HepG2 (cell line): ENCODE measurements at regions of chr1 and their contacts with region 1.

Region 1: GRCh38 chr1:151739590-151740375 is 18.5 kb downstream of the RIIAD1 start:
- DNase-seq: no peak
- ATAC-seq: no peak
- H3K4me3 ChIP-seq: no peak overlapping the region
- H3K27ac ChIP-seq: no peak overlapping the region
- H3K4me1 ChIP-seq: no peaks in the 10 kb centered on the region
- H3K27me3 ChIP-seq: peaks cover 0 to 11% of the 10 kb centered on the region in 2 experiments; a peak in 2 of 5 replicates
- CTCF ChIP-seq: no peak
- EP300 ChIP-seq: no peak
- POLR2A ChIP-seq: no peak
- RAD21 ChIP-seq: no peak

Region 2: GRCh38 chr1:151443846-151444782 is 295.7 kb before region 1 on chr1:
- CTCF ChIA-PET with region 1: no interaction called
- POLR2A ChIA-PET with region 1: no interaction called
- in situ Hi-C with region 1: no loop called
- intact Hi-C with region 1: loop called (anchors 5 kb)
- DNase-seq: peak; percentile 69
- ATAC-seq: peak; percentile 93
- H3K4me3 ChIP-seq: no peak overlapping the region
- H3K27ac ChIP-seq: peak overlapping the region; percentile 11
- H3K4me1 ChIP-seq: no peaks in the 10 kb centered on the region
- H3K27me3 ChIP-seq: no peaks in the 10 kb centered on the region
- CTCF ChIP-seq: peak; percentile 73
- EP300 ChIP-seq: no peak
- POLR2A ChIP-seq: no peak
- RAD21 ChIP-seq: peak; percentile 60; the same call in 1 of the 2 replicates

Region 3: DNA sequence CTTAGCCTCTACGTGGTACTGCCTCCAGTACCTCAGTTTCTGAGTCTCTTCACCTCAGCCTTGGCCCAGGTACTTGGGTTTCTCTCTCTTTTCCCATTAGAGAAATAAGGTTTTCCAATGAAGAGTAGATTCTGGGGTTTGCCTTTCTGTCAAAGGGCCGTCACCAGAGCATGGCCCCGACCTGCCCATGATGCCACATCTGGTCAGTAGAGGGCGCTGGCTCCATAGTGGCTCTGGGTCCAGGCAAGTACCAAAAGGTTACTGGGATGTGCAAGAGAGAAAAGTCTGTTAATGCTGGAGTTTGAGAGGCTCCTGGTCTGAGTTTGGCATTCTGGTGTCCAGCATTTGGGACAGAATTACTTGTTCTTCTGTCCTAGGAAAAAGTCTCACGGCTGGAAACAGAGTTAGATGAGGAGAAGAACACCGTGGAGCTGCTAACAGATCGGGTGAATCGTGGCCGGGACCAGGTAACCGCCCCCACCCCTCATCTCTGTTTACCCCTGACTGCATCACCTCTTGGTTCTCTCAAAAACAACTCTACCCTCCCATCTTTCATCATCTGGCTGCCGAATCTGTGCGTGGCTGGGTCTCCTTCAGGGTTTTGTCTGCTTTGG is 205.0 kb before region 1 on chr1:
- CTCF ChIA-PET with region 1: interaction called, 15 read pairs
- POLR2A ChIA-PET with region 1: no interaction called
- in situ Hi-C with region 1: loop called (anchors 25 kb)
- intact Hi-C with region 1: loop called (anchors 1 kb)
- DNase-seq: peak; percentile 53
- ATAC-seq: peak; percentile 85
- H3K4me3 ChIP-seq: no peak overlapping the region
- H3K27ac ChIP-seq: no peak overlapping the region
- H3K4me1 ChIP-seq: peaks cover 16% of the 10 kb centered on the region
- H3K27me3 ChIP-seq: no peaks in the 10 kb centered on the region
- CTCF ChIP-seq: peak; percentile 93
- EP300 ChIP-seq: no peak
- POLR2A ChIP-seq: no peak
- RAD21 ChIP-seq: peak; percentile 87

Region 4: DNA sequence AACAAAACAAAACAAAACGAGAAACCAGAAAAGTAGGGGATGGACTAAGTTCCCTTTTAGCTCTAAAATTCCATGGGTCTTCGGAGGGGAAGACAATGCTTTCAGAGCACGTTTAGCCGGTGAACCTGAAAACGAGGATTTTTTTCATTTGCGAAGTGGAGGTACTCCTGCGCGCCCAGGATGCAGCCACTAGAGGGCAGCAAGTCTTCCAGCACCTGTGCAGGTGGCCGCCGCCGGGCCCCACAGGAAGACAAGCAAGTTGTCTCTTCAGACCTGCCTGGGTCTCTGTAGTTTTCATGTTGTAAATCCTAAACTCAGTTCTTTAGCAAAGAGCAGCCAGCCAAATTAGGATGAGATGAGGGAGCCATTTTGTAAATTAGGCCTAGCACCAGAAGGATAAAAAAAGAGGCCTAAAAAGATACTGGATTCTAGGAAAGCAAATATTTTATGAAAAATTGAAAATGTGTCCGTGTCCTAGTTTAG is 145.6 kb before region 1 on chr1:
- CTCF ChIA-PET with region 1: interaction called, 21 read pairs
- POLR2A ChIA-PET with region 1: no interaction called
- in situ Hi-C with region 1: loop called (anchors 10 kb)
- intact Hi-C with region 1: loop called (anchors 1 kb)
- DNase-seq: peak; percentile 59
- ATAC-seq: peak; percentile 92
- H3K4me3 ChIP-seq: peak overlapping the region in 2 of 3 experiments; percentile 15 to 21; a peak in 2 of 6 replicates
- H3K27ac ChIP-seq: no peak overlapping the region
- H3K4me1 ChIP-seq: peaks cover 34% of the 10 kb centered on the region
- H3K27me3 ChIP-seq: peaks cover 0 to 3% of the 10 kb centered on the region in 2 experiments; a peak in 1 of 5 replicates
- CTCF ChIP-seq: peak; percentile 91
- EP300 ChIP-seq: no peak
- POLR2A ChIP-seq: no peak
- RAD21 ChIP-seq: peak; percentile 80

Region 5: GRCh38 chr1:151693076-151693651 is 46.6 kb before region 1 on chr1:
- CTCF ChIA-PET with region 1: interaction called, 16 read pairs
- POLR2A ChIA-PET with region 1: no interaction called
- in situ Hi-C with region 1: no loop called
- intact Hi-C with region 1: loop called (anchors 1 kb)
- DNase-seq: peak; percentile 36
- ATAC-seq: peak; percentile 62
- H3K4me3 ChIP-seq: no peak overlapping the region
- H3K27ac ChIP-seq: no peak overlapping the region
- H3K4me1 ChIP-seq: no peaks in the 10 kb centered on the region
- H3K27me3 ChIP-seq: no peaks in the 10 kb centered on the region
- CTCF ChIP-seq: peak; percentile 77
- EP300 ChIP-seq: no peak
- POLR2A ChIP-seq: no peak
- RAD21 ChIP-seq: peak; percentile 69

Region 6: DNA sequence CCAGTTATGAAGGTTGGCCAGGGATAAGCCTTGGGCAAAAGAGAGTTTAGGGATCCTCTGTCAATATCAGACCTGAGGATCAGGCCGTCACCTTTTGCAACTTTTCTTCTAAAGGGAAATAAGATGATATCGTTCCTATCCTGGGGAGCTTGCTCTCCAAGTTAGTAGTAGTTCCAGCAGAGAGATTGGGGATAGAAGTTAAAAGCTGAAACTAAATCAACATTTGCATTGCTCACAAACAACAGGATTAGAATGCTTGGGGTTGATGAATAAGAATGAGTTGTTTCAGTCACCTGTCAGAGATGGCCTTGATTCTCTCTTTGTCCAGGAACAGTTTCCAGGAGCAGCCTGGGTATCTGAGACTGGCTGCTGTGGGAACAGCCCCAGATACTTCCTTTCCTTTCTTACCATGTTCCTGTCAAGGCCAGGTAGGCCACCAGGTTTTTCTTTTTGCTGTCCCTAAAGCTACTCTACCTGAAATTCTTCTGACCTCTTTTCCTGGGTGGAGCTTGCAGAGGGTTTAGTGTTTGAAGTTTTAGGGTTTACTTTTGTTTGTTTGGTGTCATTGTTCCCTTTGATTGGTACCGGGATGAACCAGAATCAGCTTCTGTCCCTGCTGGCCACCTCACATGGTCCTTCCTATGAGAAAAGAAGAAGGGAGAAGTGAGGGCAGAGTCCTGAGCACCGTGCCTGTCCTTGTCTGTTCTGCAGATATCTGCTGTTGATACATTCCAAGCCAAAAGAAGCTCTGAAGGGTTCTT is 15.8 kb before region 1 on chr1:
- CTCF ChIA-PET with region 1: no interaction called
- POLR2A ChIA-PET with region 1: no interaction called
- in situ Hi-C with region 1: no loop called
- intact Hi-C with region 1: no loop called
- DNase-seq: no peak
- ATAC-seq: no peak
- H3K4me3 ChIP-seq: no peak overlapping the region
- H3K27ac ChIP-seq: no peak overlapping the region
- H3K4me1 ChIP-seq: peaks cover 44% of the 10 kb centered on the region
- H3K27me3 ChIP-seq: peaks cover 3 to 36% of the 10 kb centered on the region in 2 experiments
- CTCF ChIP-seq: no peak
- EP300 ChIP-seq: no peak
- POLR2A ChIP-seq: no peak
- RAD21 ChIP-seq: no peak

Region 7: DNA sequence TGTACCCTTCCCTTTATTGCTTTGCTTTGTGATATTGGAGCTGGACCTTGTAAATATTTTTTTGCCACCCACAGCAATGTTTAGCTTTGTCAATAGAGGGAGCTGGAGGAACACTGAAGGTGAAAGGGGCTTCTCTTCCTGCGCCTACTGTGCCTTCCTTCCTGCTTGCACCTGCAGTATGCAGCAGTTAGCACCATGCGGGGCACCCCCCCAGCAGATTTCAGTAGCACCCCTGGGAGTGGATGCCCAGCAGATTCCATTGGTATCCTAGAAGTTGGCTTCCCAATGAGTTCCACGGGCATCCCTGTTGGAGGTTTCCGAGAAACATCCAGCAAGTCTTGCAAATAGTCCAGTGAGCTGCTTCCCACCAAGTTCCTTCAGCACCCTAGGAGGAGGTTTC is 228.3 kb after region 1 on chr1:
- CTCF ChIA-PET with region 1: no interaction called
- POLR2A ChIA-PET with region 1: no interaction called
- in situ Hi-C with region 1: no loop called
- intact Hi-C with region 1: no loop called
- DNase-seq: peak; percentile 66
- ATAC-seq: peak; percentile 93
- H3K4me3 ChIP-seq: no peak overlapping the region
- H3K27ac ChIP-seq: no peak overlapping the region
- H3K4me1 ChIP-seq: peaks cover 20% of the 10 kb centered on the region
- H3K27me3 ChIP-seq: no peaks in the 10 kb centered on the region; a peak in 1 of 5 replicates
- CTCF ChIP-seq: peak; percentile 94
- EP300 ChIP-seq: no peak
- POLR2A ChIP-seq: no peak
- RAD21 ChIP-seq: peak; percentile 90